ENCODE measurements at regions of chr4 and their contacts with region 1.

Region 1: DNA sequence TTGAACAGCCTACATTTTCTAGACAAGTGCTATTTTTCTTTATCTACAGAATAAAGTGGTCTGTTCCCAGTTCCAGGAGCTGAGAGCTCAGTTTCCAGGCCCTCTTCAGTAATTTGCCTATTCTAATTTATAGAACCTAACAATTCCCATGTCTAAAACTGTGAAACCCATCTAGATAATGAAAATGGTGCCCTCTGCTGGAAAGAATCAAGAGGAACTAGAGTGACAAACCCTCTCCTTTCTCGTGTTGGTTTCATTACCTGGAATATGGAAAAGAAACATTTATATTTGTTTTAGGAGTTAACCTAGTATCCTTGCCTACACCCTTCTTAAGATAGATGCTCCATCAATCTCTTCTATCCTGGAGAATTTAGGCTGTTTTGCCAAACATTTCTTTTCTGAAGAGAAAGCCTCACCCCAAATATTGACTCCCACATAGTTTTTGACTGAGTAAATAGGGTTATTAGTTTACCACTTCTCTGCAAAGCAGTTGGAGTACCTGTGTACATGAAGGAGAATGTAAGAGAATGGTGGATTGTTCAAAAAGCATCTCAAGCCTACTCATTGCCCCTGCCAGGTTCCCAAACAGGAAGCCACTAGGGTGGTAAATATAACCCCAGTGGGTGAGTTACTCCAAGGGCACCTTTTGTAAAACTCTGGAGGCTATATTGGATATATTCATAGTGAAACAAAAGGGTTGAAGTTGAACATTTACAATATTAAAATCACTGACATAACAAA is 121.6 kb downstream of the RASL11B start:
- DNase-seq: no peak

Region 2: GRCh38 chr4:52103319-52103718 is 880.4 kb before region 1 on chr4:
- intact Hi-C with region 1: loop called (anchors 10 kb)
- DNase-seq: no peak

Region 3: DNA sequence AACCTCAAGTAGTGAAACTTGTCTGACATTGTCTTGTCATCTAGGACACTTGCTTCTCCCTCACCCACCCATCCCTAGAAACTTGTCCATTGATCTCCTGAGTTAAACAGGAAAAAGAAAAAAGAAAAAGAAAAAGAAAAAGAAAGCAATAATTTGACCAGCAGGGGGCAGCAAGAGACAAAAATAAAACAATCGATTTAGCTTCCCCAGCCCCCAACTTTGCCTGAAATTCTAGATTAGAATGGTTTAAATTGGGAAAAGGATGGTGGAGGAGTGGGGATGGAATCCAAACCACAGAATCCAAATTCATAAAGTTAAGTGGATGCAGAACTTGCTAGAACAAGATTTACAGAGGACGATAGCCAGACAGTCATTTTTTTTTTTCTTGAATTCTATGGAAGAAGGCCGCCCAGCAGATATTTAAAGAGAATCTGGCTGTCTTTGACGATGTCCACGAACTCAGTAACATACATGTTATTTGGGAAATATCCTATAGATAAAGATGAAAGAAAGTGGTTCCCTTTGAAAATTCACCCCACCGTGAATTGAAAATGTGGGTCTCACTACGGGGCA is 607.5 kb before region 1 on chr4:
- intact Hi-C with region 1: loop called (anchors 2 kb)
- DNase-seq: no peak

Region 4: GRCh38 chr4:52606726-52607125 is 377.0 kb before region 1 on chr4:
- intact Hi-C with region 1: no loop called
- DNase-seq: no peak

Region 5: GRCh38 chr4:52655516-52655915 is 328.2 kb before region 1 on chr4:
- intact Hi-C with region 1: no loop called
- DNase-seq: no peak

Region 6: GRCh38 chr4:52665592-52665991 is 318.1 kb before region 1 on chr4:
- intact Hi-C with region 1: loop called (anchors 5 kb)
- DNase-seq: no peak

Region 7: DNA sequence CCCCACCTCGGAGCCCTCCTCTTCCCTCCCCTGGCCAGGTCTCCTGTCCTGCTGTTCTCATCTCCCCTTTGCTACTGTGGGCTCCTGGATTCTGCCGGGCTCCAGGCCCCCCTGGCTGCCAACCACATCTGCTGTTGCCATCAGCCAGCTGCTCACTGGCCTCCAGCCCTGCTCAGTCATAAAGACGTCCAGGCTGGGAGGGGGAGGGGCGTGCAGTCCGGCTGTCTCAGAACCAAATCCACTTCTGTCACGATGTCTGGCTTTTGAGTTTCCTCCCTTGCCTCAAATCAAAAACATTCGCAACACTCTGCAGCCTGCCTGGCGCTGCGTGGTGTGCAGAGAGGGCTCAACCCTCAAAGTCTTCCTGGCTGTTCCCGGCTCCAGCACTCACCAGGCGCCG is 114.5 kb before region 1 on chr4:
- intact Hi-C with region 1: loop called (anchors 5 kb)
- DNase-seq: peak; percentile 83

Region 8: DNA sequence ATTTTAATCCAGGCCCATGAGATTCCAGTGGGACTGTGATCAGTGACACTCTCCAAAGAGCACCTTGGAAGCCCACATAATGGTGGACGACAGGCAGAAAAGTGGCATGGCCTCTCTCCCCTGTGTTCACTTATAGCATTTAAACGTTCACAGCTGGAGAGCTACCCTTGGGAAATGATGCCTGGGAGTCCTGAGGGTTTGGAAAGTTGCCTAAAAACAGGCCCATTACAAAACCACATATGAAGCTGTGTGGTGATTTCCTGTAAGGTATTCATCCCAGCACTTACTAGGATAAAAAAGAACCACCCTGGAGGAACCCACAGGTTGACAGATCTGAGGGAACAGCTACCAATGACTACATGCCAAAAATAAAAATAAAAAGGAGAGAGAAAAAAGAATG is 71.5 kb after region 1 on chr4:
- intact Hi-C with region 1: no loop called
- DNase-seq: no peak